Naive thymus-derived CD4-positive, alpha-beta T cell (primary cell): ENCODE measurements at regions of chr2 and their contacts with region 1.

Region 1: DNA sequence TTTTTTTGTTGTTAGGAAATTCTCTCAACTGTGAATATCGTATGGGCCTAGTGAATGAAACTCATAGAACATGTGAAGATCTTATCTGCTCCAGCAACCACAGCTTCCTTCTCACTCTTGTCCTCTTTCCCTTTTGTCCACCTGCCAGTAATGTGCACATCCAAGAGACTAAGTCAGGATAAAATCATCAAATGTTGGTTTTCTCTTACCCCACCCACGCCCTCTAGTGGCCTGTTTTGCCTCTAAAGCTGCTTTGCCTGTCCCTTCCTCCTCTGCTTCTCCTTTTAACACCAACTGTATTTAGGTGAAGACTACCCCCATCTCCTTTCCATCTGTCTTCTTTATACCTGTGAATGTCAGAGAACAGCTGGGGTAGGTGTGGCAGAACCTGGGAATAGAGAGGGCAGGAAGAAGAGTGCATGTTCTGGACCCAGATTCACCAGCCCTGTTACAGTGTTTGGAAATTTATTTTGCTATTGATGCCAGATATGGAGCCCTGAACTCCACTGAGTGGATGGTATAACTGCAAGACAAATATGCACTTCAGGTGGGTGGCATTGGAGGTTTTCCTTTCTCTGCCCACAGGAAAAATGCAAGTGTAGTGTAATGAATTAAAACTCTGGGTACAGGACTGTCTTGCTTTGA is 8.4 kb upstream of the MGAT5 start:
- DNase-seq: peak; percentile 47 to 71 (median 64)
- ATAC-seq: peak; percentile 85
- H3K4me3 ChIP-seq: no peak overlapping the region
- H3K4me3 Mint-ChIP-seq: peak overlapping the region; percentile 3 to 68 (median 48)
- H3K27ac ChIP-seq: no peak overlapping the region
- H3K27ac Mint-ChIP-seq: peak overlapping the region in 8 of 9 donors; percentile 4 to 82 (median 73)
- H3K4me1 ChIP-seq: peaks cover 50 to 54% of the 10 kb centered on the region in 2 donors
- H3K4me1 Mint-ChIP-seq: peaks cover 52 to 91% (median 74%) of the 10 kb centered on the region in 7 donors
- H3K27me3 ChIP-seq: no peaks in the 10 kb centered on the region
- H3K27me3 Mint-ChIP-seq: no peaks in the 10 kb centered on the region

Region 2: GRCh38 chr2:134127496-134127895 is 118.0 kb before region 1 on chr2:
- CTCF ChIA-PET with region 1: interaction called, 12 read pairs
- POLR2A ChIA-PET with region 1: interaction called, 6 read pairs
- intact Hi-C with region 1: no loop called
- DNase-seq: peak in 4 of 9 donors; percentile 12 to 48 (median 24)
- ATAC-seq: peak; percentile 66
- H3K4me3 ChIP-seq: peak overlapping the region; percentile 13
- H3K4me3 Mint-ChIP-seq: peak overlapping the region; percentile 23 to 69 (median 64)
- H3K27ac ChIP-seq: no peak overlapping the region
- H3K27ac Mint-ChIP-seq: peak overlapping the region in 6 of 9 donors; percentile 28 to 76 (median 71)
- H3K4me1 ChIP-seq: peaks cover 14 to 46% of the 10 kb centered on the region in 2 donors
- H3K4me1 Mint-ChIP-seq: peaks cover 55 to 87% (median 81%) of the 10 kb centered on the region in 7 donors
- H3K27me3 ChIP-seq: no peaks in the 10 kb centered on the region
- H3K27me3 Mint-ChIP-seq: peaks cover 0 to 2% (median 0%) of the 10 kb centered on the region in 5 donors

Region 3: DNA sequence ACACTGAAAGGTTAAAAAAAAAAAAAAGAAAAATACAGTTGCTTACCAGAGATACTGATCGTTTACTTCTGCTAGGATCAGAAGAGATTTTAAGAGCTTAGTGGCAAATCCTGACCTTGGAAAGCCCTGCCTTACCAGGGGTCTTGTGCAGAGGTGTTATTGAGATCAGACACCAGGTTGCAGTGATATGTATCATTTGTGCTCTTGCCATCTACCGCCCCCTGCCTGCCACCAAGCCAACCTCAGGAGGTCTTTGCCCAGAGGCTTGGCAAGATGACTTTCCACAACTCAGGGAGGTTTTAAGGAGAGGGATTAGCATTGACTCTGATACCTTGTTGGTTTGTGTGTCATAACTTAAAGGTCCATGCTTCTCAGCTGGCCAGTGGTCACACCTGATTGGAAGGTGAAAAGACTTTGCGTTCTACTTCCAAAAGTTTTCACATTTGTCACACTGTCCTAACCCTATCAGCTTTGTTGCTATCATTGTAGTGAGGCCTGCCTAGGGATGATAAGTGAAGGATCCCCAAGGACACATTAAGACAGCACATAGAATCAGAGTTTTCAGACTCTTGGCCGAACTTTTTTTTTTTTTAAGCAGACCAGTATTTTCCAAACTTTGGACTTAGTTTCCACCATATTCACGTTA is 37.8 kb before region 1 on chr2:
- CTCF ChIA-PET with region 1: interaction called, 11 read pairs
- POLR2A ChIA-PET with region 1: interaction called, 3 read pairs
- intact Hi-C with region 1: loop called in 1 of 2 experiments (anchors 5 kb)
- DNase-seq: peak; percentile 39 to 62 (median 53)
- ATAC-seq: peak; percentile 92
- H3K4me3 ChIP-seq: no peak overlapping the region
- H3K4me3 Mint-ChIP-seq: no peak overlapping the region
- H3K27ac ChIP-seq: no peak overlapping the region
- H3K27ac Mint-ChIP-seq: peak overlapping the region in 1 of 9 donors; percentile 53
- H3K4me1 ChIP-seq: peaks cover 21 to 34% of the 10 kb centered on the region in 2 donors
- H3K4me1 Mint-ChIP-seq: peaks cover 5 to 17% (median 11%) of the 10 kb centered on the region in 7 donors
- H3K27me3 ChIP-seq: no peaks in the 10 kb centered on the region
- H3K27me3 Mint-ChIP-seq: no peaks in the 10 kb centered on the region

Region 4: DNA sequence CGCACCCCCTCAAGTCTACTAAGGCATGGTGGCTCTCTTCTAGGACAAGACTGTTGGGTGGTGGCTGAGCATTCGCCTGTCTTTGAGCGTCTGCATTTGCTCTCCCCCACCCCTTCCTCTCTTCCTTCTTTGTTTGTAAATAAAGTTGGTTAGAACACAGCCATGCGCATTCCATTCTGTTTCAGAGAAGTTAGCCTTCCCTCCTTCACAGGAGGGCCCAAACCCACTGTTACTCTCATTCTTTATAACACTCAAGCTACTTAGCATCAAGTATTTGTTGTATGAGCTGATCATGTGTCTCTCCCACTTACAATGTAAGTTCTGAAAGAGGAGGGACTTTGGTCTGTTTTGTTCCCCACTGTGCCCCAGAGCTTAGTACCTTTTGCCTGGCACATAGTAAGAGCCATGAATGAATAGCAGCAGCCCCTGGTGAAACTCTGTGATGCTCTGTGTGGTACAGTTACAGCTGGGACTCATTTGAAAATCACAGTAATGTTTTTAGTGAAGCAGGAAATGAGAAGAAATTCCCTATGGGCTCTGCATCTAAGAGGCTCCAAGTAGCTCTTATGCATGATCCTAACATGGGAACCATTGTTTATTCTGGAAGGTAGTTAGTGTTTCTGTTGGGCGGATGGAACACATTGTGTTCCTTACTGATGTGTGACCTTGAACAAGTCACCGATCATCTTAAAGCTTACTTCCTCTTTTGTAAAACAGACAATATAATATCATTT is 16.1 kb after region 1 on chr2:
- CTCF ChIA-PET with region 1: interaction called, 13 read pairs
- POLR2A ChIA-PET with region 1: interaction called, 5 read pairs
- intact Hi-C with region 1: loop called (anchors 1 kb)
- DNase-seq: no peak
- ATAC-seq: no peak
- H3K4me3 ChIP-seq: no peak overlapping the region
- H3K4me3 Mint-ChIP-seq: peak overlapping the region in 9 of 10 donors; percentile 15 to 71 (median 34)
- H3K27ac ChIP-seq: no peak overlapping the region
- H3K27ac Mint-ChIP-seq: peak overlapping the region in 8 of 9 donors; percentile 2 to 93 (median 54)
- H3K4me1 ChIP-seq: peaks cover 27 to 61% of the 10 kb centered on the region in 2 donors
- H3K4me1 Mint-ChIP-seq: peaks cover 46 to 77% (median 71%) of the 10 kb centered on the region in 7 donors
- H3K27me3 ChIP-seq: no peaks in the 10 kb centered on the region
- H3K27me3 Mint-ChIP-seq: no peaks in the 10 kb centered on the region

Region 5: DNA sequence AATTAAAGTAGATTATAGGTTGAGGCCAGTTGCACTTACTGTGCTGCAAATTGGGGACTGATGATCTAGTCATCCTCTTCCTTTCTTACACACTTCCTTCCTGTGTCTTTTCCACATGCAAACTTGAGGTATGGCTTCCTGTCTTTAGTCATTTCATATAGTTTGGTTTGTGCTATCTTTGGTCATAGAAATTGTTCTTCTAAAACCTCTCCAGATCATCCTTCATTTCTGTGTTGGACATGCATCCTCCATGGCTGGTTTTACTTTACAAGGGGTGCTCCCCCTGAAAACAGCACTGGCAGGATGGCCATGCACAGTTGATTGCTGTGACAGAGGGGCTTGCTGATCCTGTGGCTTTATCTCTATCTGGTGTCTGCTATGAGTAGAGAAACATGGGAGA is 44.9 kb after region 1 on chr2:
- CTCF ChIA-PET with region 1: interaction called, 5 read pairs
- POLR2A ChIA-PET with region 1: interaction called, 3 read pairs
- intact Hi-C with region 1: loop called (anchors 2 kb)
- DNase-seq: peak in 4 of 9 donors; percentile 13 to 37 (median 29)
- ATAC-seq: peak; percentile 55
- H3K4me3 ChIP-seq: peak overlapping the region; percentile 2
- H3K4me3 Mint-ChIP-seq: no peak overlapping the region
- H3K27ac ChIP-seq: peak overlapping the region; percentile 33
- H3K27ac Mint-ChIP-seq: no peak overlapping the region
- H3K4me1 ChIP-seq: peaks cover 48 to 77% of the 10 kb centered on the region in 2 donors
- H3K4me1 Mint-ChIP-seq: peaks cover 0 to 39% (median 30%) of the 10 kb centered on the region in 7 donors
- H3K27me3 ChIP-seq: no peaks in the 10 kb centered on the region
- H3K27me3 Mint-ChIP-seq: peaks cover 0 to 8% (median 0%) of the 10 kb centered on the region in 5 donors

Region 6: DNA sequence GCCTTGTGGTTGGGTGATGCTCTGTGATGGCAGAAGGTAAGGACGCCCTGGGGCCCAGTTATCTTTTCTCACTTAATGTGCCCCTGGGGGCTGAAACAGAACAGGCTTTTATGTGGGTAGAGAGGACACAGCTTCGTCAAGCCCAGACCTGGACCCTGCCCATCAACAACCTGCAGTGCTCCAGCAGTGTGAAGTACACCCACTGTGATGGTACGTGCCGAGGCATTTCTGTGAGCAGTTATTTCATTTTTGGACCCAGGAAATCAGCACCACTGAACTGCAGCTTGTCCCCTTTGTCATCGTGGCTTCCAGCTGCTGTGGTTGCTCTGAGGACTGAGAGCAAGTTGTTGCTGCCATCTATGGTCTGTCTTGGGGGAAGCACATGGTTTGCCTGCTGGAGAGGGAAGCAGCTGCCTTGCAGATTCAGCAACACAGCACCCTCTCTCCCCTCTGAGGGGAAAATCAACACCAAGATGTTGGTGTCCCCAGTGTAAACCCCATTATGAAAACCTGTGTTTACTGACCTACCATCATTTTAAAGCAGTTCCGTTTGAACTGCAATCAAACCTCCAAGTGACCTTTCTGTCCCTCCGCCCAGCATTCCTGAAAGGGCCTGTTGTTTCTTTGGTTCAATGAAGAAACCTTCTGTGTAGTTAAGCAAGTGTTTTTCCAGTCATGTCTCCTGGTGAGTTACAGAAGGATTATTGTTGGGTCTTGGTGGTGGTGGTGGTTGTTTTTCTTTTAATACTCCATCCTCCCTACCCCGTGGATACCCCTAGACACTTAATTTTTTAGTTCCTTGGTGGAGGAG is 166.6 kb after region 1 on chr2:
- CTCF ChIA-PET with region 1: interaction called, 9 read pairs
- POLR2A ChIA-PET with region 1: no interaction called
- intact Hi-C with region 1: loop called (anchors 1 kb)
- DNase-seq: peak; percentile 27 to 83 (median 70)
- ATAC-seq: peak; percentile 95
- H3K4me3 ChIP-seq: no peak overlapping the region
- H3K4me3 Mint-ChIP-seq: no peak overlapping the region
- H3K27ac ChIP-seq: no peak overlapping the region
- H3K27ac Mint-ChIP-seq: peak overlapping the region in 6 of 9 donors; percentile 6 to 63 (median 40)
- H3K4me1 ChIP-seq: peaks cover 6 to 17% of the 10 kb centered on the region in 2 donors
- H3K4me1 Mint-ChIP-seq: peaks cover 17 to 47% (median 38%) of the 10 kb centered on the region in 7 donors
- H3K27me3 ChIP-seq: no peaks in the 10 kb centered on the region
- H3K27me3 Mint-ChIP-seq: no peaks in the 10 kb centered on the region